Common myeloid progenitor, CD34-positive (primary cell): ENCODE measurements at regions of chr3 and their contacts with region 1.

Region 1: GRCh38 chr3:195909644-195910508 is 1.5 kb upstream of the TNK2 start:
- DNase-seq: peak; percentile 74 to 85 (median 80)
- H3K4me3 ChIP-seq: peak overlapping the region; percentile 26 to 89 (median 75)
- H3K27ac ChIP-seq: peak overlapping the region in 1 of 2 experiments; percentile 43
- H3K4me1 ChIP-seq: peaks cover 13 to 62% (median 52%) of the 10 kb centered on the region in 4 experiments
- H3K27me3 ChIP-seq: no peaks in the 10 kb centered on the region

Region 2: DNA sequence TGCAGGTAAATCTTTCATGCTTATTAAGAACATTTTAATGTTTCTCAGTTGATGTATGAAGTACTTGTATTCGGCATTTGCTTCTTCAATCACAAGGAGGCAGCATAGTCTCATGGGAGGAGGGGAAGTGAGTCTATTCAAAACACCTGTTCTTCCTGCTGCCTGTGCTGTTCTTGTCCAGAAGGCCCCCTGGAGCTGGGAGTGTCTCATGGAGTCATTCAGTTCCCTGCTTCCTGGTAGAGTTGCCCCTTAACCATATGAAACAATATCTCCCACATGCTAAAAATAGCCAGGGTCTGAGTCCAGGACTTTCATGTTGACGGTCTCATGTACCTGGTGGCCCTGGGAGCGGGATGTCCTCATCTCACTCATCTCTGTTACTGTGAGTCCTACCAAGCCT is 351.3 kb before region 1 on chr3:
- CTCF ChIA-PET with region 1: no interaction called
- POLR2A ChIA-PET with region 1: no interaction called
- DNase-seq: peak; percentile 43 to 67 (median 64)
- H3K4me3 ChIP-seq: no peak overlapping the region
- H3K27ac ChIP-seq: no peak overlapping the region
- H3K4me1 ChIP-seq: no peaks in the 10 kb centered on the region
- H3K27me3 ChIP-seq: no peaks in the 10 kb centered on the region

Region 3: GRCh38 chr3:195863121-195864006 is 46.5 kb before region 1 on chr3:
- CTCF ChIA-PET with region 1: interaction called, 238 read pairs
- POLR2A ChIA-PET with region 1: interaction called, 6 read pairs
- DNase-seq: peak; percentile 72 to 83 (median 83)
- H3K4me3 ChIP-seq: no peak overlapping the region
- H3K27ac ChIP-seq: no peak overlapping the region
- H3K4me1 ChIP-seq: peaks cover 0 to 23% (median 7%) of the 10 kb centered on the region in 4 experiments
- H3K27me3 ChIP-seq: no peaks in the 10 kb centered on the region

Region 4: DNA sequence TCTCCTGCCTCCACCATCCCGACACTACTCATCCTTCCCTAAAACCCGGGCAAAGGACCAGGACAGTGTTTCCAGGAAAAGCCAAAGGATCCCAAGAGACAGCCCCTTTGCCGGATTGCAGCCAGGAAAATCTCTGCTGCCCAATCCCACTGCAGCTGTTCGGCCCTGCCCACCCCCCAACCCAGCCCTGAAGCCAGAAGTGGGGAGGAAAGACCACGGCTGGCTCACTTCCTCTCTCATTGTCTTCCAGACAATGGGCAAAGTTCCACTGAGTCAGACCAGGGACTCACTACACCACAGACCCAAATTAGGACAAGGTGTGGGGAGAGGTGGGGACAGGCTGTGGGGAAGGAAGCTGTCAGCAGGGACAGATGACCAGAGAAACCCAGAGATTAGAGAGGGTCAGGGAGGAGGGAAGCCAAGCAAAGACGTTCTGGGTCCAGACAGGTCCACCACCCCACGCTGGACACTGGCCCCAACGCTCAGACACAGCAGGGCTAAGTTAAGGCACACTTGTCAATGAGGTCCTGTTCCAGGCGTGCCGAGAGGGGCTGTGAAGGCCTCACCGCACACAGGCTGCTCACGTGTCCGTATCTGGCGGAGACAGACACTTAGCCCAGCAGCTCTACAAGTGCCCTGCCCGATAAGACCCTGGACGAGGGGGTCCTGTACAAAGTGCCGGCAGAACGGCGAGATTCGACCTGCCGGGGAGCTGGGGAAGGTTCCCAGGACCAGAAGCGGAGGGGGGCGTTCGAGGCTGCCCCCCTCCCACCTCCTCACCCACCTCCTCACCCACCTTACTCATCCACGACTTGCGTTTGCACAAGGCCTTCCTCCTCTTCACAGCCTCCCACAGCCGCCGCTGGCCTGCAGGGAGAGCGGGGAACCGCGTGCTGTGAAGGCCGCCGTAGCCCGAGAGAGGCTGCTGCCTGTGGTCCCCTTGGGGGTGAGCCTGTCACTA is 23.4 kb before region 1 on chr3:
- CTCF ChIA-PET with region 1: interaction called, 360 read pairs
- POLR2A ChIA-PET with region 1: interaction called, 6 read pairs
- DNase-seq: no peak
- H3K4me3 ChIP-seq: no peak overlapping the region
- H3K27ac ChIP-seq: no peak overlapping the region
- H3K4me1 ChIP-seq: peaks cover 0 to 3% (median 0%) of the 10 kb centered on the region in 4 experiments
- H3K27me3 ChIP-seq: no peaks in the 10 kb centered on the region

Region 5: GRCh38 chr3:195894780-195895607 is 14.9 kb before region 1 on chr3:
- CTCF ChIA-PET with region 1: interaction called, 360 read pairs
- POLR2A ChIA-PET with region 1: interaction called, 109 read pairs
- DNase-seq: peak; percentile 79 to 85 (median 82)
- H3K4me3 ChIP-seq: peak overlapping the region; percentile 36 to 88 (median 82)
- H3K27ac ChIP-seq: peak overlapping the region; percentile 50 to 83
- H3K4me1 ChIP-seq: peaks cover 4 to 73% (median 67%) of the 10 kb centered on the region in 4 experiments
- H3K27me3 ChIP-seq: no peaks in the 10 kb centered on the region

Region 6: GRCh38 chr3:195921334-195921791 is 11.5 kb after region 1 on chr3:
- CTCF ChIA-PET with region 1: interaction called, 14 read pairs
- POLR2A ChIA-PET with region 1: no interaction called
- DNase-seq: no peak
- H3K4me3 ChIP-seq: no peak overlapping the region
- H3K27ac ChIP-seq: no peak overlapping the region
- H3K4me1 ChIP-seq: peaks cover 0 to 9% (median 3%) of the 10 kb centered on the region in 4 experiments
- H3K27me3 ChIP-seq: peaks cover 0 to 1% (median 0%) of the 10 kb centered on the region in 5 experiments